ENCODE measurements at regions of chr4 and their contacts with region 1.

Region 1: DNA sequence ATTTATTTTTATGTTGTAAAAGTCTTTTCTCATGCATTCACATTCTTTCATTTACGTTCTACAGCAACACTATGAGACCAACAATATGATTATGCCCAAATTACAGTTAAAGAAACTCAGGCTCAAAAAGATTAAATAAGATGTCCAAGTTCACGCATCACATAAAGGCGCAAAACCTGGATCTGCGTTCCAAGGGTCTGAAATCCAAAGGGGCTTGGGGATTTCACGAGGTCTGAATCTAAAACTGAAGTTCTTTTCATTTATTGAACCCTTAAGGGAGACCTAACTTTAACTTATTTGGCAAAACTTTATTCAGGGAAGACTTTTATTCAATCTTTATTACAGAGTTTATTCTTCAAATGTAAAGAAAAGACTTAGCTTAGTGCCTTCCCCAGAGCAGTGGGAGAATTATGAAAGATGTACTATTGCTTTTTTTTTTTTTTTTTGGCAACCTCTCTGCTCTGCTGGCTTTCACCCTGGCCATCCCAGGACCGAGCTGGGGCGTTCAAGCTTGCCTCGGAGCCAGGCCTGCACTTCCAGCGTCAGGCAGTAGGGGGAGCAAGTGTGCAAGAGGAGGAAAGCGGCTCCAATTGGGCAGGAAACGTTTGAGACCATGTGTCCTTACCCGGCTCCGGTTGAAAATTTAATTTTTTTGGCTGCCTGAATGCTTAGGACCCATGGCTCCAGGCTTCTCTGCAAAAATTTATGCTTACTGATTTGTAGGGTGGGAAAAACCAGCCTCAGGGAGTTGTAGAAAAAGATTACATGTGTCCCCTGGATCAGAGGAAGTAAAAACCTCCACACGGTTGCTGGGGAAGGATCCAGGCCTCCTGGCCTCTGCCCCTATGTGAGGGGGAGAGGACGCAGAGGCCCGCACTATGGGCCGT is 344.3 kb upstream of the KLF3 start:
- DNase-seq: peak; percentile 96
- ATAC-seq: peak; percentile 84
- H3K4me3 Mint-ChIP-seq: peak overlapping the region; percentile 68
- H3K27ac Mint-ChIP-seq: peak overlapping the region; percentile 78
- H3K4me1 Mint-ChIP-seq: peaks cover 50% of the 10 kb centered on the region
- H3K27me3 Mint-ChIP-seq: peaks cover 7% of the 10 kb centered on the region

Region 2: GRCh38 chr4:37594108-37594507 is 725.6 kb before region 1 on chr4:
- CTCF ChIA-PET with region 1: no interaction called
- POLR2A ChIA-PET with region 1: no interaction called
- intact Hi-C with region 1: no loop called
- DNase-seq: no peak
- ATAC-seq: no peak
- H3K4me3 Mint-ChIP-seq: no peak overlapping the region
- H3K27ac Mint-ChIP-seq: no peak overlapping the region
- H3K4me1 Mint-ChIP-seq: no peaks in the 10 kb centered on the region
- H3K27me3 Mint-ChIP-seq: no peaks in the 10 kb centered on the region

Region 3: GRCh38 chr4:38334810-38335537 is 15.3 kb after region 1 on chr4:
- CTCF ChIA-PET with region 1: interaction called, 22 read pairs
- POLR2A ChIA-PET with region 1: no interaction called
- intact Hi-C with region 1: no loop called
- DNase-seq: no peak
- ATAC-seq: peak; percentile 60
- H3K4me3 Mint-ChIP-seq: peak overlapping the region; percentile 13
- H3K27ac Mint-ChIP-seq: peak overlapping the region; percentile 8
- H3K4me1 Mint-ChIP-seq: peaks cover 50% of the 10 kb centered on the region
- H3K27me3 Mint-ChIP-seq: peaks cover 13% of the 10 kb centered on the region

Region 4: DNA sequence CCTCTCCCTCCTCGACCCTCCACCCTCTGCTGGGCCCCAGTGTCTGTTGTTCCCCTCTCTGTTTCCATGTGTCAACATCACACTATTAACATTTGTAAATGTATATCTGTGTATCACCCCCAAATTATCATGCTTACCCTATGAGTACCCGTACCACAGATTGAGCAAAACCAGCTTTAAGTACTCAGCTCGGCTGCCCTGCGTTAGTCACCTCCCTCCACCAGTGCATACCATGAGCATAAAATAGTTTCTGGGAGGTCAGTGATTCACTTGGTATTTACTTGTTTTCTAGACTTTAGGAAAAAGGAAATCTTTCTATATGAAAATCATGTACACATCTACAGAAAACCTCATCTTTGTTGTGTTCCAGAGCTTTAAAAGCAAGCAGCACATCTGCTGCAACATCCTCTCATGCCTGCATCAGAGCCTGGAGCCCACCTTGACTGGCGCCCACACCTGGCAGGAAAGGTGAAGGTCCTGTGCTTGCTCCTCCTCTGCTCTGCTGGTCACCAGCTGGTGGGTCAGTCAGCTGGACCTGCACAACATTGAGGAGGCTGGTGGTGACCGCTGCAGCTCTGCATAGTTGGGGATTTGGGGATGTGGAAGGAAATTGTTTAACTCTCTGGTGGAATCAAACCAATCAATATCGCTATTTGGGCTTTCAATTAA is 129.9 kb after region 1 on chr4:
- CTCF ChIA-PET with region 1: no interaction called
- POLR2A ChIA-PET with region 1: interaction called, 6 read pairs
- intact Hi-C with region 1: loop called in 1 of 2 experiments (anchors 5 kb)
- DNase-seq: no peak
- ATAC-seq: no peak
- H3K4me3 Mint-ChIP-seq: no peak overlapping the region
- H3K27ac Mint-ChIP-seq: no peak overlapping the region
- H3K4me1 Mint-ChIP-seq: peaks cover 35% of the 10 kb centered on the region
- H3K27me3 Mint-ChIP-seq: peaks cover 7% of the 10 kb centered on the region

Region 5: DNA sequence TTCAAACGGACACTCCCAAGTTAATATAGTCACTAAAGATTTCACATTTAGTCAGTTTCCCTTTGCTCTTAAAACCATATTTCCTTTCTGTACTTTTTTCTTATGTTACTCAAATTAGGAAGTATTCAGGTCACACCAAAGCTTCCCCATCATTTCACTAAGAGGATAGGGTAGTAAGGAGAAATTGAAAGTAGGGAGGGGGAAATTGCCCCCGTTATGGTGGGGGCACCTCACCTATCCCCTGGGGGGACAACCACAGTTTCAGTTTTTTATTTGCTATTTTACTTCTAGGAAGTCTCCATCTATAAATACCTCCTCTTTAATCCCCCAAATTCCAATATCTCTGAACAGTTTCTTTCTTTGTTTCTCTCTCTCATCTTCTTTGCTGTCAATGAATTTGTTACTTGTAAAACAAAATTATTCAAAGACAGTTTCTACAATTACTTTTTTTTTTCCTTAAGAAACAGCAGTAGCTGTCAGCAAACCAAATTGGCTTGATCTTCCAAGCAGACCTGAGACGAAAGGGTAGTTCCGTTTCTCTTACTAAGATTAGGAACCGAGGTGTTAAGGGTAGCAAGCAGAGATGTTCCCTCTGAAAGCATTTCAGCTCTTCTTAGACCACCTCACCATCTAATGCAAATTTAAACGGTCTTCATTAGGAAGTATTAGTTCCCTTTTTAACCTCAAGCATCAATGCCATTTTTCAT is 184.1 kb after region 1 on chr4:
- CTCF ChIA-PET with region 1: no interaction called
- POLR2A ChIA-PET with region 1: interaction called, 12 read pairs
- intact Hi-C with region 1: no loop called
- DNase-seq: no peak
- ATAC-seq: no peak
- H3K4me3 Mint-ChIP-seq: no peak overlapping the region
- H3K27ac Mint-ChIP-seq: no peak overlapping the region
- H3K4me1 Mint-ChIP-seq: peaks cover 39% of the 10 kb centered on the region
- H3K27me3 Mint-ChIP-seq: peaks cover 5% of the 10 kb centered on the region

Region 6: GRCh38 chr4:38663801-38664705 is 344.4 kb after region 1 on chr4 and contains the start of gene KLF3:
- CTCF ChIA-PET with region 1: interaction called, 5 read pairs
- POLR2A ChIA-PET with region 1: no interaction called
- intact Hi-C with region 1: loop called in 1 of 2 experiments (anchors 2 kb)
- DNase-seq: peak; percentile 84
- ATAC-seq: peak; percentile 62
- H3K4me3 Mint-ChIP-seq: peak within 1 kb of the TSS; percentile 88
- H3K27ac Mint-ChIP-seq: peak within 1 kb of the TSS; percentile 78
- H3K4me1 Mint-ChIP-seq: peaks cover 61% of the 10 kb centered on the region
- H3K27me3 Mint-ChIP-seq: no peaks in the 10 kb centered on the region
- total RNA-seq, gene KLF3: 6.1 to 6.2 TPM

Region 7: GRCh38 chr4:38687571-38688011 is 367.9 kb after region 1 on chr4:
- CTCF ChIA-PET with region 1: interaction called, 10 read pairs
- POLR2A ChIA-PET with region 1: interaction called, 3 read pairs
- intact Hi-C with region 1: no loop called
- DNase-seq: peak; percentile 39
- ATAC-seq: peak; percentile 97
- H3K4me3 Mint-ChIP-seq: no peak overlapping the region
- H3K27ac Mint-ChIP-seq: peak overlapping the region; percentile 69
- H3K4me1 Mint-ChIP-seq: peaks cover 60% of the 10 kb centered on the region
- H3K27me3 Mint-ChIP-seq: no peaks in the 10 kb centered on the region

Region 8: GRCh38 chr4:38730830-38731646 is 411.3 kb after region 1 on chr4:
- CTCF ChIA-PET with region 1: interaction called, 4 read pairs
- POLR2A ChIA-PET with region 1: no interaction called
- intact Hi-C with region 1: loop called (anchors 1 to 5 kb)
- DNase-seq: peak; percentile 91
- ATAC-seq: peak; percentile 80
- H3K4me3 Mint-ChIP-seq: no peak overlapping the region
- H3K27ac Mint-ChIP-seq: no peak overlapping the region
- H3K4me1 Mint-ChIP-seq: peaks cover 15% of the 10 kb centered on the region
- H3K27me3 Mint-ChIP-seq: no peaks in the 10 kb centered on the region